Mammary epithelial cell (primary cell): ENCODE measurements at regions of chr22 and their contacts with region 1.

Region 1: GRCh38 chr22:28538922-28539321 is 140.7 kb downstream of the TTC28 start:
- DNase-seq: no peak
- H3K4me3 ChIP-seq: no peak overlapping the region
- H3K27ac ChIP-seq: no peak overlapping the region
- H3K4me1 ChIP-seq: no peaks in the 10 kb centered on the region
- H3K27me3 ChIP-seq: no peaks in the 10 kb centered on the region
- CTCF ChIP-seq: no peak

Region 2: DNA sequence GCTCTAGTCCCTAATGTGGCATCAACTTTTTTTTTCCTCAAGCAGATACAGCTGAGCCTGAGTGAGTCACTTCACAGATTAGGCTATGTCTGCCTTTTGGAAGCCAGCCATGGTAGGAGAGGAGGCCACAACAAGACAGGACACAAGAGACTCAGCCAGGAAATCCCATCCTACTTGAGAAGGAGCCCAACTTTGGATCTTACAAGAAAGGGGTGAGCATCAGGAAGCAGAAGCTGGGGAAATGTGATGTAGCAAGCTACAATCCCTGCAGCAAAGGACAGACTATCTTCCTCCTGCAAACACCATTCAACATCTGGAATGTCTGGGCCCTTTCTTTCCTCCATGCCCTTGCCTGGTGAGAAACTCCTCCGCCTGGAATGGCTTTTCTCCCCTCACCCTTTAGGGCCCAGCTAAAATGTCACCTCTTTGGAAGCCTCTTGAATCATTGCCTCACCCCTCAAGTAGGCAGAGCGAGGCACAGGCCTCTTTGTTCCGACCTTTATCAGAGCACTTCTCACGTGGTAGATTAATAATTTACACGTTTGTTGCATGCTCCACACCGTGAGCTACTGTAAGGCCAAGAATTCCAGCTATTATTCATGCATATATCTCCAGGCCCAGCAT is 463.5 kb before region 1 on chr22:
- CTCF ChIA-PET with region 1: no interaction called
- dilution Hi-C with region 1: loop called (anchors 10 kb)
- in situ Hi-C with region 1: no loop called
- intact Hi-C with region 1: no loop called
- DNase-seq: peak; percentile 52
- H3K4me3 ChIP-seq: no peak overlapping the region
- H3K27ac ChIP-seq: no peak overlapping the region
- H3K4me1 ChIP-seq: no peaks in the 10 kb centered on the region
- H3K27me3 ChIP-seq: no peaks in the 10 kb centered on the region
- CTCF ChIP-seq: no peak